ENCODE measurements at regions of chr5 and their contacts with region 1.

Region 1: DNA sequence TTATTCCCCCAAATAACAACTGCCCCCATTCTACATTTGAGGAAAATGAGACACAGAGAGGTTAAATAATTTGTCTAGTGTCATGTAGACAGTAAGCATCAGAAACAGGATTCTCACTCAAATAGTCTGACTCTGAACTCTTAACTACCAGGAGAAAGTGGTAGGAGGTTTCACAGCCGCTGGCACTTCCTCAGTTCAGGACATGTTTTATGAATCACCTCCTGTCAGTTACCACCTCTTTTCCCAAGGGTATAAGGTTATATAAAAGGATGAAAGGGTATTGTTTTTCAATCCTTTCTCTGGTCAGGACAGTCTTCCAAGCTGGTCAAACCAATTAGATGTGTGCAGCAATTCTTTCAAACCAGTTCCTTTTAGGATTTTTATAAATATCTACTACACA is 52.1 kb downstream of the TSSK1B start:
- DNase-seq: no peak
- ATAC-seq: no peak

Region 2: GRCh38 chr5:113606298-113607134 is 223.8 kb after region 1 on chr5:
- intact Hi-C with region 1: loop called (anchors 5 kb)
- DNase-seq: no peak
- ATAC-seq: peak; percentile 95